CD8-positive, alpha-beta memory T cell (primary cell): ENCODE measurements at regions of chr13 and their contacts with region 1.

Region 1: DNA sequence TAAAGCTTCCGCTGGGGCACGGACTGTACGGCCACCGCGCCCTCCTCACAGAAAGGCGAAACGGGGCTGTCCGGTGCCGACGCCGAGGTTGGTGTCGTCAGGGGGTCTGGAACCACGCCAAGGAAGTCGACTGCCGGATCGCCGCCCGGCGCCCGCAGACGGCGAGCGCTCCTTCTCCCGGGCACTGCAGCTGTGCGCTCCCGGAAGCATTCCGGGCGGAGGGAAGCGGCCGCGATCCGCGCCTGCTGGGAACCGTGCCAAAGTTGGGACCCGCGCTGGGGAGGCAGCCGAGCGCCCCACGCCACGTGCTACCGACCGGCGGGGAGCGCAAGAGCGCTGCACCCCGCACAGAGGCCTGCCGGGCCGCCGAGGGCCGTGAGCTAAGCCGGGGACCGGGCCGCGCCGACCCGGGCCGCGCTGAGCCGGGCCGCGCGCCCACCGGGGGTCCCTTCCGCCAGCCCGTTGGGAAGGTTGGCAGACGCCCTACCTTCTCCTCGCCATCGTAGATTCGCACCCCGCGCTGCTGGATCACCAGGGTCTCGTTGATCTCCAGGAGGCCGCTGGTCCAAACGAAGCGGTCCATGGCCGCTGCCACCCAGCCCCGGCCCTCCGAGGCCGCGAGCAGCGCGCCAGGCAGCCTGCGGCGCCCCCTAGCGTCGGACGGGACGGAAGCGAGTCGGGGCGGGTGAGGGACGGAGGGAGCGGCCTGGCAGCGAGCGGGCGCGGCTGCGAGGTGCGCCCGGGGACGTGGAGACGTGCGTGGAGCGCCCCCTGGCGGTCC is at the start of gene VPS36:
- DNase-seq: peak; percentile 92 to 95 (median 93)
- H3K4me3 ChIP-seq: peak within 1 kb of the TSS; percentile 95
- H3K4me3 Mint-ChIP-seq: peak within 1 kb of the TSS; percentile 88 to 98 (median 93)
- H3K27ac ChIP-seq: peak within 1 kb of the TSS; percentile 84
- H3K27ac Mint-ChIP-seq: peak within 1 kb of the TSS; percentile 84 to 98 (median 94)
- H3K4me1 ChIP-seq: peaks cover 37% of the 10 kb centered on the region
- H3K4me1 Mint-ChIP-seq: peaks cover 37 to 60% (median 50%) of the 10 kb centered on the region in 3 donors
- H3K27me3 ChIP-seq: no peaks in the 10 kb centered on the region
- H3K27me3 Mint-ChIP-seq: no peaks in the 10 kb centered on the region
- total RNA-seq, gene VPS36: 33.8 to 34.9 TPM

Region 2: DNA sequence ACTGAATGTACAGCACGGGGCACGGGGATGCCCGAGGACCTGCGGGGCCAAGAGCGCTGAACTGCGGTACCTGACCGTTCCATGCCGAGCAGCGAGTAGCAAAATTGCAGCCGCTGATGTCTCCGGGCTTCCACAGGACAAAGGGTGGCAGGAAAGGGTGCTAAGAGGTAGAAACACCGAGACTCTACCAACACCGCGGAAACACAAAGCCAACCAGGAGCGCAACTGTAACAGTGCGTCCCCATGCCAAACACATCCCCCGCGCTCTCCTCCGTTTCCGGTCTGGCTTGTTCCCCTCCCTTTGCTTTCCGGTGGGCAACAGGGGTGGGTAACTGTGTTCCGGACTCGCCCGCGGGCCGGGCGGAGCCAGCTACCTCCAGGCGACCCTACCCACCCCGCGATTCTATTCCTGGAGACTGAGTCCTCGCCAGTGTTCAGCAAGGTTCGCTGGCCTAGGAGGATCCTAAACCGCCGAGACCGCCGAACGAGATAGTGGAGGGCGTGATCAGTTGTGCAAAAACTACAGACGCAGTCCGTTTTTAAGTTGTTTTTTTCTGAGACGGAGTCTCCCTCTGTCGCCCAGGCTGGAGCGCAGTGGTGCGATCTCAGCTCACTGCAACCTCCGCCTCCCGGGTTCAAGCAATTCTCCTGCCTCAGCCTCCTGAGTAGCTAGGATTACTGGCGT is 255.9 kb before region 1 on chr13:
- CTCF ChIA-PET with region 1: interaction called, 14 read pairs
- POLR2A ChIA-PET with region 1: no interaction called
- DNase-seq: peak; percentile 73 to 90 (median 81)
- H3K4me3 ChIP-seq: peak overlapping the region; percentile 87
- H3K4me3 Mint-ChIP-seq: peak overlapping the region; percentile 94 to 99 (median 98)
- H3K27ac ChIP-seq: peak overlapping the region; percentile 69
- H3K27ac Mint-ChIP-seq: peak overlapping the region; percentile 84 to 99 (median 98)
- H3K4me1 ChIP-seq: no peaks in the 10 kb centered on the region
- H3K4me1 Mint-ChIP-seq: peaks cover 25 to 60% (median 48%) of the 10 kb centered on the region in 3 donors
- H3K27me3 ChIP-seq: no peaks in the 10 kb centered on the region
- H3K27me3 Mint-ChIP-seq: peaks cover 0 to 2% of the 10 kb centered on the region in 2 donors

Region 3: DNA sequence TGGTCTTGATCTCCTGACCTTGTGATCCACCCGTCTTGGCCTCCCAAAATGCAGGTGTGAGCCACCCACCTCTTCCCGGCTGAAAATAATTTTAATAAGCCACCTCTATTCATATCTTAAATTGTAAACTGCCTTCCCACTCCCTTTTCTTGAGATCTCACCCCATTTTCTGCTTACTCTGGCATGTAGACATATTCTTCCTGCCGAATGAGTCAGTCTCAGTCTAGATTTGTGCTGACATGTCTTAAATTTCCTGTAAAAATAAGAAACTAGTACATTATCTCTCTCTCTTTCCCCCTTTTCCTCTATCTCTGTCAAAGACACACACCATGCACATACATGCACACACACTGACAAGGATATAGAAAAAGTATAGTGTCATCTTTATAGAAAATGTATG is 105.2 kb before region 1 on chr13:
- CTCF ChIA-PET with region 1: interaction called, 18 read pairs
- POLR2A ChIA-PET with region 1: no interaction called
- DNase-seq: no peak
- H3K4me3 ChIP-seq: no peak overlapping the region
- H3K4me3 Mint-ChIP-seq: no peak overlapping the region
- H3K27ac ChIP-seq: no peak overlapping the region
- H3K27ac Mint-ChIP-seq: no peak overlapping the region
- H3K4me1 ChIP-seq: no peaks in the 10 kb centered on the region
- H3K4me1 Mint-ChIP-seq: no peaks in the 10 kb centered on the region
- H3K27me3 ChIP-seq: no peaks in the 10 kb centered on the region
- H3K27me3 Mint-ChIP-seq: peaks cover 2 to 19% of the 10 kb centered on the region in 2 donors

Region 4: DNA sequence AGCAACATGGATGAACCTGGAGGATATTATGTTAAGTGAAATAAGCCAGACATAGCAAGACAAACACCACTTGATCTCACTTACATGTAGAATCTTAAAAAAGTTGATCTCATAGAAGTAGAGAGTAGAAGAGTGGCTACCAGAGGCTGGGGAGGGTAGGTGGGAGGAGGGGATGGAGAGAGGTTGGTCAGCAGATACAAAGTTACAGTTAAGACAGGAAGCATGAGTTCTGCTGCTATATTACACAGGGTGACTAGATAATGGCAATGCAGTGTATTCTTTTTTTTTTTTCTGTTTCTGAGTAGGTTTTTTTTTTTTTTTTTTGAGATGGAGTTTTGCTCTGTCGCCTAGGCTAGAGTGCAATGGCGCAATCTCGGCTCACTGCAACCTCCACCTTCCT is 29.0 kb before region 1 on chr13:
- CTCF ChIA-PET with region 1: interaction called, 21 read pairs
- POLR2A ChIA-PET with region 1: no interaction called
- DNase-seq: no peak
- H3K4me3 ChIP-seq: no peak overlapping the region
- H3K4me3 Mint-ChIP-seq: no peak overlapping the region
- H3K27ac ChIP-seq: no peak overlapping the region
- H3K27ac Mint-ChIP-seq: peak overlapping the region in 1 of 8 donors; percentile 51
- H3K4me1 ChIP-seq: no peaks in the 10 kb centered on the region
- H3K4me1 Mint-ChIP-seq: peaks cover 0 to 4% (median 1%) of the 10 kb centered on the region in 3 donors
- H3K27me3 ChIP-seq: no peaks in the 10 kb centered on the region
- H3K27me3 Mint-ChIP-seq: peaks cover 0 to 2% of the 10 kb centered on the region in 2 donors

Region 5: GRCh38 chr13:52428295-52428694 is 21.9 kb before region 1 on chr13:
- CTCF ChIA-PET with region 1: interaction called, 21 read pairs
- POLR2A ChIA-PET with region 1: no interaction called
- DNase-seq: no peak
- H3K4me3 ChIP-seq: no peak overlapping the region
- H3K4me3 Mint-ChIP-seq: no peak overlapping the region
- H3K27ac ChIP-seq: no peak overlapping the region
- H3K27ac Mint-ChIP-seq: no peak overlapping the region
- H3K4me1 ChIP-seq: no peaks in the 10 kb centered on the region
- H3K4me1 Mint-ChIP-seq: peaks cover 2 to 8% (median 8%) of the 10 kb centered on the region in 3 donors
- H3K27me3 ChIP-seq: no peaks in the 10 kb centered on the region
- H3K27me3 Mint-ChIP-seq: no peaks in the 10 kb centered on the region

Region 6: GRCh38 chr13:52652196-52652979 is 202.2 kb after region 1 on chr13 and contains the start of gene SUGT1:
- CTCF ChIA-PET with region 1: interaction called, 16 read pairs
- POLR2A ChIA-PET with region 1: interaction called, 3 read pairs
- DNase-seq: peak; percentile 90 to 97 (median 96)
- H3K4me3 ChIP-seq: peak within 1 kb of the TSS; percentile 82
- H3K4me3 Mint-ChIP-seq: no peak within 1 kb of the TSS
- H3K27ac ChIP-seq: peak within 1 kb of the TSS; percentile 98
- H3K27ac Mint-ChIP-seq: no peak within 1 kb of the TSS
- H3K4me1 ChIP-seq: peaks cover 43% of the 10 kb centered on the region
- H3K4me1 Mint-ChIP-seq: peaks cover 0 to 13% (median 12%) of the 10 kb centered on the region in 3 donors
- H3K27me3 ChIP-seq: no peaks in the 10 kb centered on the region
- H3K27me3 Mint-ChIP-seq: no peaks in the 10 kb centered on the region
- total RNA-seq, gene SUGT1: 66.7 to 71.1 TPM

Region 7: DNA sequence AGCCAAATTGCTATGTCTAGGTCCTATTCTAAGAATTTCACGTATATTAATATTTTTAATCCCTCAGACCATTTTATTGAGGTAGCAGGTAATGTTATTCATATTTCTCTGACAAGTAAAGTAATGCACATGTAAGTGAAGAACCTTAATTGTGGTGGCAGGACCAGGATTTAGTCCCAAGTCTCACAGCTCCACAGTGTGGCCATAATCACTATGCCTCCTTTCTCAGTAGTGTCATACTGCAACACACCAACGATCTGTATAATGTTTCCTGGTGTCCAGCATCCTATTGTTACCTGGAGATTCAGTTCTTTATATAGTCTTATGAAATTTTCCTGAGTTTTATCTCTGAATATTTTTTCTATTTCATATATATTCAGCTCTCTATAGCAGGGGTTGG is 918.7 kb after region 1 on chr13:
- CTCF ChIA-PET with region 1: no interaction called
- POLR2A ChIA-PET with region 1: no interaction called
- DNase-seq: no peak
- H3K4me3 ChIP-seq: no peak overlapping the region
- H3K4me3 Mint-ChIP-seq: no peak overlapping the region
- H3K27ac ChIP-seq: no peak overlapping the region
- H3K27ac Mint-ChIP-seq: no peak overlapping the region
- H3K4me1 ChIP-seq: no peaks in the 10 kb centered on the region
- H3K4me1 Mint-ChIP-seq: no peaks in the 10 kb centered on the region
- H3K27me3 ChIP-seq: no peaks in the 10 kb centered on the region
- H3K27me3 Mint-ChIP-seq: no peaks in the 10 kb centered on the region